CD14-positive monocyte (primary cell): ENCODE measurements at regions of chr12 and their contacts with region 1.

Region 1: GRCh38 chr12:31325877-31326631 is at the start of gene SINHCAF:
- DNase-seq: peak; percentile 97 to 98 (median 98)
- H3K4me3 ChIP-seq: peak within 1 kb of the TSS; percentile 61 to 86 (median 70)
- H3K4me3 Mint-ChIP-seq: peak within 1 kb of the TSS; percentile 99
- H3K27ac ChIP-seq: peak within 1 kb of the TSS; percentile 85 to 90
- H3K27ac Mint-ChIP-seq: peak within 1 kb of the TSS; percentile 87 to 95 (median 91)
- H3K4me1 ChIP-seq: peaks cover 15 to 43% of the 10 kb centered on the region in 2 donors
- H3K4me1 Mint-ChIP-seq: peaks cover 25% of the 10 kb centered on the region
- H3K27me3 ChIP-seq: no peaks in the 10 kb centered on the region
- H3K27me3 Mint-ChIP-seq: peaks cover 0 to 2% (median 2%) of the 10 kb centered on the region in 3 donors
- CTCF ChIP-seq: no peak
- polyA plus RNA-seq, gene SINHCAF: 14.2 to 20.2 (median 20.1) TPM

Region 2: GRCh38 chr12:31250179-31250578 is 75.9 kb before region 1 on chr12:
- intact Hi-C with region 1: no loop called
- DNase-seq: no peak
- H3K4me3 ChIP-seq: no peak overlapping the region
- H3K4me3 Mint-ChIP-seq: no peak overlapping the region
- H3K27ac ChIP-seq: no peak overlapping the region
- H3K27ac Mint-ChIP-seq: no peak overlapping the region
- H3K4me1 ChIP-seq: peaks cover 11% of the 10 kb centered on the region in 2 donors
- H3K4me1 Mint-ChIP-seq: peaks cover 18% of the 10 kb centered on the region
- H3K27me3 ChIP-seq: no peaks in the 10 kb centered on the region
- H3K27me3 Mint-ChIP-seq: peaks cover 0 to 1% (median 0%) of the 10 kb centered on the region in 3 donors
- CTCF ChIP-seq: no peak

Region 3: GRCh38 chr12:31659087-31659933 is 333.3 kb after region 1 on chr12 and contains the start of gene ETFBKMT:
- intact Hi-C with region 1: loop called in 1 of 2 experiments (anchors 10 kb)
- DNase-seq: peak; percentile 73 to 81 (median 75)
- H3K4me3 ChIP-seq: peak within 1 kb of the TSS; percentile 61 to 99 (median 96)
- H3K4me3 Mint-ChIP-seq: peak within 1 kb of the TSS; percentile 82 to 97
- H3K27ac ChIP-seq: peak within 1 kb of the TSS; percentile 93 to 98
- H3K27ac Mint-ChIP-seq: peak within 1 kb of the TSS; percentile 96 to 98 (median 98)
- H3K4me1 ChIP-seq: peaks cover 7 to 14% of the 10 kb centered on the region in 2 donors
- H3K4me1 Mint-ChIP-seq: peaks cover 14% of the 10 kb centered on the region
- H3K27me3 ChIP-seq: no peaks in the 10 kb centered on the region
- H3K27me3 Mint-ChIP-seq: peaks cover 0 to 2% (median 1%) of the 10 kb centered on the region in 3 donors
- CTCF ChIP-seq: no peak
- polyA plus RNA-seq, gene ETFBKMT: 0.67 to 2.2 (median 1.5) TPM